Activated CD8-positive, alpha-beta memory T cell treated with anti-CD3 and anti-CD28 coated beads, Interleukin-2, amount 10 ng/mL, durations not matched to agents 7 days and 5 days (primary cell): ENCODE measurements at regions of chr7 and their contacts with region 1.

Region 1: DNA sequence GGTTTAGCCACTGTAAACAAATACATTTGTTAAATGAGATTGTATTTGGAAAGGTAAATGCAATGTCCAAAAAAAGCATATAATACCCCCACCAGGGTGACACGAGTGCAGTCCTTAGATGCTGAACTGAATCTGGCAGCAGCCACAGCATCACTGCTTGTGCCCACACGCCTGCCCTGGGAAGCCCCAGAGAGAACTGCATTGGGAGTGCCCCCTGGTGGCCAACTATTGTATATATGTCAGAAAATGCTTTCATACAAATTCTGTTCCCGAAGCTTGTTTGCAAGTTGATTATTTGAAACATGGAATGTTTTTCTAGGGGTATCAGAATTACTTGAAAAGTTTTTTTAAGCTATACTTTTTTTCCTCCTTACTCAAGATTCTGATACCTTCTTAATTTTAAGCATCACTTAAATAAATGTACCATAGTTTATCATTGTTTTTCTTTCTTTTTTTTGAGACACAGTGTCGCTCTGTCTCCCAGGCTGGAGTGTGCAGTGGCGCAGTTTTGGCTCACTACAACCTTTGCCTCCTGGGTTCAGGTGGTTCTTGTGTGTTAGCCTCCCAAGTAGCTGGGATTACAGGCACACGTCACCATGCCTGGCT is 50.1 kb downstream of the LANCL2 start:
- DNase-seq: peak; percentile 85
- ATAC-seq: peak; percentile 86
- H3K4me3 Mint-ChIP-seq: no peak overlapping the region
- H3K27ac Mint-ChIP-seq: no peak overlapping the region
- H3K4me1 Mint-ChIP-seq: peaks cover 2% of the 10 kb centered on the region
- H3K27me3 Mint-ChIP-seq: no peaks in the 10 kb centered on the region

Region 2: DNA sequence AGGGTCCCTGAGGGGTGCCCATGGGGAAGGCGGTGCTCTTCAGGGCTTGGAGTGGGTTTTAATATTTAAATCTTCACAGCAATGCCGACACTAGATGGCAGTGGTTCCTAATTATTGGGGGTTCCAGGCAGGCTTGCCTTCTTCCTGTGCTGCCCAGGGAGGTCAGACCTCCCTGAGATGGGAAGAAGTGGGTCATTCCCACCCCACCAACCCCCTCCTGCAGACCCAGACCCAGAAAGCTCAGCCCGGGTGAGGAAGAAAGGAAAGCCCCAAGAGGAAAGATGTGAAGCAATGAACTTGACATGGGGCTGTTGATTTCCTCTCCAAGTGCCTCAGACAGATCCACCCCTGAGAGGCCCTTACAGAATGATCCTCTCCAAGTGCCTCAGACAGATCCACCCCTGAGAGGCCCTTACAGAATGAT is 135.2 kb before region 1 on chr7:
- CTCF ChIA-PET with region 1: interaction called, 29 read pairs
- DNase-seq: peak; percentile 70
- ATAC-seq: peak; percentile 81
- H3K4me3 Mint-ChIP-seq: no peak overlapping the region
- H3K27ac Mint-ChIP-seq: no peak overlapping the region
- H3K4me1 Mint-ChIP-seq: peaks cover 2% of the 10 kb centered on the region
- H3K27me3 Mint-ChIP-seq: peaks cover 20% of the 10 kb centered on the region

Region 3: DNA sequence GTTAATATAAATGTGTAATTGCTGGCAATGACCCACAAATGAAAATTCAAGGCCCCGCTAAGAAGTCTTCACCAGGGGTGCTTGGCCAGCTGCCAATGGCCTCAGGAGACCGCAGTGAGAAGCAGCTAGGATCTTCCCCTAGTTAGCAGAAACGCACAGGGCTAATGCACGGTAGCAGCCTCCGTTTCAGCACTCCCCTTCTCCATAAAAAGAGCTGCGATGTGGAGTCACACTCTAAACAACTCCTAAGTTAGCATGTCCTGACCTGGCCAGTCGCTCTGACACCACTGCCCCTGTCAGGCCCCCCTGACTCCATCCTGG is 308.3 kb after region 1 on chr7:
- CTCF ChIA-PET with region 1: no interaction called
- DNase-seq: no peak
- ATAC-seq: no peak
- H3K4me3 Mint-ChIP-seq: no peak overlapping the region
- H3K27ac Mint-ChIP-seq: no peak overlapping the region
- H3K4me1 Mint-ChIP-seq: no peaks in the 10 kb centered on the region
- H3K27me3 Mint-ChIP-seq: peaks cover 3% of the 10 kb centered on the region